Activated CD8-positive, alpha-beta T cell treated with anti-CD3 and anti-CD28 coated beads for 36 hours (primary cell): ENCODE measurements at regions of chr12 and their contacts with region 1.

Region 1: GRCh38 chr12:53757095-53757770 is 5.5 kb upstream of the CISTR start:
- DNase-seq: peak; percentile 96
- ATAC-seq: peak; percentile 98
- H3K4me3 Mint-ChIP-seq: peak overlapping the region; percentile 62
- H3K27ac Mint-ChIP-seq: peak overlapping the region; percentile 78
- H3K4me1 Mint-ChIP-seq: peaks cover 23% of the 10 kb centered on the region
- H3K27me3 Mint-ChIP-seq: peaks cover 25% of the 10 kb centered on the region
- CTCF ChIP-seq: peak; percentile 92

Region 2: DNA sequence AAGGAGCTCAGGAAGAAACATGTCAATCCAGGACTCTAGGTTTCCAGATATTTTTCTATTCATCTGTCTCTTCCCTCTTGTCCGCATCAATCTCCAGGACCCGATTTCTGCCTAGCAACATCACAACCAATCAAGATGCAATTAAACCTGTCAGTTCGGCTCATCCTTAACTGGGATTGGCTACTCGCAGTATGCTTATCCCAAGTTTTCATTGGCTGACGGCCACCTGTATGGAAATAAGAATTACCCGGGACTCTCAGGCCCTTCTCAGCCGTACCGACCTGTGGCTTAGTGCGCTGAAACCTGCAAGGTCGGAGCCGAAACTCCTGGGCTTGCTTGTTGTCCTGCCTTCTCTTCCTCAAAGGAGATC is 61.0 kb before region 1 on chr12:
- CTCF ChIA-PET with region 1: interaction called, 25 read pairs
- POLR2A ChIA-PET with region 1: no interaction called
- intact Hi-C with region 1: no loop called
- DNase-seq: no peak
- ATAC-seq: no peak
- H3K4me3 Mint-ChIP-seq: no peak overlapping the region
- H3K27ac Mint-ChIP-seq: no peak overlapping the region
- H3K4me1 Mint-ChIP-seq: peaks cover 27% of the 10 kb centered on the region
- H3K27me3 Mint-ChIP-seq: peaks cover 75% of the 10 kb centered on the region
- CTCF ChIP-seq: no peak

Region 3: DNA sequence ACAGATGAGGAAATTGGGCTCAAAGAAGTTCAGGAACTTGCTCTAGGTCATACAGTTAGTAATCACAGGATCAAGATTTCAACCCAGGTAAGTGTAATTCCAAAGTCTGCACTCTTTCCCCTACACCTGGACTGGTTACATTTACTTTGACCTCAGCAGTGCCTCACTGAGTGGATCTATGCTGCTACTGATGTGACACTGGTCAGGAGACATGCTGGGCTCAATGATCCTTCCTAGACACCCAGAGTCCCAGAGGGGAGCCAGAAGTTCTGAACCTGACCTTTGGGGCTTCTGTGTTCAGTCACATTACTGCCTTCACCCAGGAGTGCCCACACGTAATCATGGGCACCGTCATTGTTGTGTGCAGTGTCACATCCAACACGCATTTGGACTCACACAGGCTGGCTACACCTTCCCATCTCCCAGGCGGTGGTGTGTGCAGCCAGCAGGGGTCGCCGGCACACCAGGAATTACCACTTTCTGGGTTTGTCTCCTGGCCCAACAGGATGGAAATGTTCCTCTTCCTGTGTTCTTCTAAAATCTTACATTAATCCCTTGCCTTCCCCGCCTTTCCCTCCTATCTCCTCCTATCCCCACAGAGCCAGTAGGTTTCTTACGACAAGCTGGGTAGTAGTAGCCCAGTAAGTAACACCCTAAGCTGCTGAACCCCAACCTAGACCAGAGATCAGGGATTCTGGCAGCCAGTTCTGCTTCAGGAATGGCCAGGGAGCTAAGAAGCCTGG is 55.5 kb before region 1 on chr12:
- CTCF ChIA-PET with region 1: interaction called, 25 read pairs
- POLR2A ChIA-PET with region 1: no interaction called
- intact Hi-C with region 1: no loop called
- DNase-seq: peak; percentile 86
- ATAC-seq: peak; percentile 96
- H3K4me3 Mint-ChIP-seq: no peak overlapping the region
- H3K27ac Mint-ChIP-seq: no peak overlapping the region
- H3K4me1 Mint-ChIP-seq: peaks cover 3% of the 10 kb centered on the region
- H3K27me3 Mint-ChIP-seq: peaks cover 71% of the 10 kb centered on the region
- CTCF ChIP-seq: peak; percentile 93

Region 4: DNA sequence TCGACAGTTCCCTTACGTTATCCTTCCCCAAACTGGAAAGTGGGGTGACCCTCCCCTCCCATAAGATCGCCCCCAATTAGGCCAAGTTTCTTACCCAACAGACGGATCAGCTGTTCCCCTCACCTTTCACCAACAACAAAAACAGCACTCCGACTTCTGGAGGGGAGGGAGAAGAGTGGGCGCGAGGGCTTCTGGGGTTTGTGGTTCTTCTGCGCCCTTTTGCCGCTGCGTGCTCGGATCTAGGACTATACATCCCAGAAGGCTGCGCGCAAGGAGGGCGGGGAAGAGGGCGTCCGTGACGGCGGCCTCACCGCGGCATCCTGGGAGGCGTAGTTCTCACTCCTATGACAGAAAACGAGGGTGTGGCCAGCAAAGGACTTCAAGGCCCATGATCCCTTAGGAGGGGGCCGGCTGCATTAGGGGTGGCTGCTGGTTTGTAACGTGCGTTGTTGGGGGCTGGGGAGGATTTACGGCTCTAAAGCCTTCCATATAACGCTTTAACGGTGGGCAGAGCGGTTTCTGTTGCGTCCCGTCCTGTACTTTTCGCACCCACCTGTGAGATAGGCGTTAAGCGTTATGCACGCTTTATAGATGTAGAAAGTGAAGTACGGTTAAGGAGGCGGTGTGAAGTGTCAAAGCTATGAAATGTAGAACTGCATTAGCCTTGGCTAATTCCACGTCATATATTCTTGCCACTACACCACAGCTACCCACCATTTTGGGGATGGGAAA is 29.8 kb before region 1 on chr12 and contains the start of gene CALCOCO1:
- CTCF ChIA-PET with region 1: interaction called, 24 read pairs
- POLR2A ChIA-PET with region 1: interaction called, 4 read pairs
- intact Hi-C with region 1: no loop called
- DNase-seq: peak; percentile 99
- ATAC-seq: peak; percentile 97
- H3K4me3 Mint-ChIP-seq: peak within 1 kb of the TSS; percentile 87
- H3K27ac Mint-ChIP-seq: peak within 1 kb of the TSS; percentile 95
- H3K4me1 Mint-ChIP-seq: peaks cover 28% of the 10 kb centered on the region
- H3K27me3 Mint-ChIP-seq: no peaks in the 10 kb centered on the region
- CTCF ChIP-seq: no peak
- total RNA-seq, gene CALCOCO1: 15.5 to 16.2 TPM

Region 5: GRCh38 chr12:53738406-53739213 is 18.6 kb before region 1 on chr12:
- CTCF ChIA-PET with region 1: interaction called, 154 read pairs
- POLR2A ChIA-PET with region 1: no interaction called
- intact Hi-C with region 1: no loop called
- DNase-seq: peak; percentile 57
- ATAC-seq: peak; percentile 80
- H3K4me3 Mint-ChIP-seq: peak overlapping the region; percentile 45
- H3K27ac Mint-ChIP-seq: no peak overlapping the region
- H3K4me1 Mint-ChIP-seq: peaks cover 19% of the 10 kb centered on the region
- H3K27me3 Mint-ChIP-seq: peaks cover 39% of the 10 kb centered on the region
- CTCF ChIP-seq: no peak

Region 6: GRCh38 chr12:53770281-53770680 is 13.0 kb after region 1 on chr12:
- CTCF ChIA-PET with region 1: interaction called, 15 read pairs
- POLR2A ChIA-PET with region 1: no interaction called
- intact Hi-C with region 1: no loop called
- DNase-seq: no peak
- ATAC-seq: no peak
- H3K4me3 Mint-ChIP-seq: no peak overlapping the region
- H3K27ac Mint-ChIP-seq: no peak overlapping the region
- H3K4me1 Mint-ChIP-seq: no peaks in the 10 kb centered on the region
- H3K27me3 Mint-ChIP-seq: peaks cover 34% of the 10 kb centered on the region
- CTCF ChIP-seq: no peak